Naive thymus-derived CD4-positive, alpha-beta T cell (primary cell): ENCODE measurements at regions of chr2 and their contacts with region 1.

Region 1: DNA sequence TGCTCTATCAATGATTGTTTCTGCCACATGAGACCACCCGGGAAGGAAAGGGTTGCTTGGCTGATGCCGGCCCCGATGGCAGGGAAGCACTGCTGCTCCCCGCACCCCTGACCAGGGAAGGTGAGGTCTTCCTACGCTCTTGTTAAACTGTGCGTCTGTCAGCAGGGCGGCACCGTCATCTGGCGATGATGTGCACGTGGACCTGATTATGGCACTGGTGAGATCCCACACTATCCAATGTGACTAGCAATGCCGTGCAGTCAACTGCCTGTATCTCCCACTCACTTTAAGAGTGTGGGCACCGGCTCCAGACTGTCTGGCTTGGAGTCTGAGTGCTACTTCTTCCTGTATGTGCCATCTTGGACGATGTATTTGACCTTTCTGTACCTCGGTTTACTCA is 209.2 kb downstream of the MYT1L start:
- DNase-seq: no peak
- ATAC-seq: no peak
- H3K4me3 ChIP-seq: no peak overlapping the region
- H3K4me3 Mint-ChIP-seq: peak overlapping the region in 4 of 10 donors; percentile 13 to 69 (median 54)
- H3K27ac ChIP-seq: no peak overlapping the region
- H3K27ac Mint-ChIP-seq: no peak overlapping the region
- H3K4me1 ChIP-seq: no peaks in the 10 kb centered on the region
- H3K4me1 Mint-ChIP-seq: peaks cover 3 to 9% (median 4%) of the 10 kb centered on the region in 7 donors
- H3K27me3 ChIP-seq: no peaks in the 10 kb centered on the region
- H3K27me3 Mint-ChIP-seq: peaks cover 0 to 13% (median 4%) of the 10 kb centered on the region in 5 donors

Region 2: GRCh38 chr2:2795438-2796091 is 673.7 kb after region 1 on chr2:
- CTCF ChIA-PET with region 1: no interaction called
- POLR2A ChIA-PET with region 1: no interaction called
- intact Hi-C with region 1: no loop called
- DNase-seq: no peak
- ATAC-seq: no peak
- H3K4me3 ChIP-seq: no peak overlapping the region
- H3K4me3 Mint-ChIP-seq: no peak overlapping the region
- H3K27ac ChIP-seq: no peak overlapping the region
- H3K27ac Mint-ChIP-seq: no peak overlapping the region
- H3K4me1 ChIP-seq: no peaks in the 10 kb centered on the region
- H3K4me1 Mint-ChIP-seq: peaks cover 0 to 2% (median 0%) of the 10 kb centered on the region in 7 donors
- H3K27me3 ChIP-seq: no peaks in the 10 kb centered on the region
- H3K27me3 Mint-ChIP-seq: peaks cover 0 to 36% (median 6%) of the 10 kb centered on the region in 5 donors

Region 3: DNA sequence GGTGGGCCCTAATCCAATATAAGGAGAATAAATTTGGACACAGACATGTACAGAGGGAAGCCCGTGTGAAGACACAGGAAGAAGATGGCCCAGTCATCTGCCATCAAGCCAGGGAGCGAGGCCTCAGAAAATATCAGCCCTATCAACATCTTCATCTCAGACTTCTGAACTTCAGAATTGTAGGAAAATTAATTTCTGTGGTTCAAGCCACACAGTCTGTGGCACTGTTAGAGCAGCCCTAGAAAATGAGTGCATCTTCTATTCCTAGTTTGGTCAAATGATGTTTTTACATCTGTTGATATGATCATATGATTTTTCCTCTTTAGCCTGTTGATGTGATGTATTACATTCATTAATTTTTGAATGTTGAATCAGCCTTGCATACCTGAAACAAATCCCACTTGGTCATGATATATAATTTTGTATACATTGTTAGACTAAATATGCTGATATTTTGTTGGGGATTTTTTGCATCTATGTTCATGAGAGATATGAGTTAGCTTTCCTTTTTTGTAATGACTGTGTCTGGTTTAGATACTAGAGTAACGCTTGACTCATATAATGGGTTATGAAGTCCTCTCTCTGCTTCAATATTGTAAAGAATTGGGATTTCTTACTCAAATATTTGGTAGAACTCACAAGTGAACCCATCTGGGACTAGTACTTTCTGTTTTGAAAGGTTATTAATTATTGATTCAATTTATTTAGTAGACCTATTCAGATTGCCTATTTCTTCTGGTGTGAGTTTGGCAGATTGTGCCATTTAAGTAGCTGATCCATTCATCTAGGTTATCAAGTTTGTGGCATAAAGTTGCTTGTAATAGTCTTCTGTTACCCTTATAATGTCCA is 804.3 kb after region 1 on chr2:
- CTCF ChIA-PET with region 1: no interaction called
- POLR2A ChIA-PET with region 1: no interaction called
- intact Hi-C with region 1: loop called in 1 of 2 experiments (anchors 2 kb)
- DNase-seq: no peak
- ATAC-seq: no peak
- H3K4me3 ChIP-seq: no peak overlapping the region
- H3K4me3 Mint-ChIP-seq: no peak overlapping the region
- H3K27ac ChIP-seq: no peak overlapping the region
- H3K27ac Mint-ChIP-seq: no peak overlapping the region
- H3K4me1 ChIP-seq: no peaks in the 10 kb centered on the region
- H3K4me1 Mint-ChIP-seq: no peaks in the 10 kb centered on the region
- H3K27me3 ChIP-seq: no peaks in the 10 kb centered on the region
- H3K27me3 Mint-ChIP-seq: peaks cover 5 to 15% (median 10%) of the 10 kb centered on the region in 5 donors